ENCODE measurements at regions of chr2 and their contacts with region 1.

Region 1: DNA sequence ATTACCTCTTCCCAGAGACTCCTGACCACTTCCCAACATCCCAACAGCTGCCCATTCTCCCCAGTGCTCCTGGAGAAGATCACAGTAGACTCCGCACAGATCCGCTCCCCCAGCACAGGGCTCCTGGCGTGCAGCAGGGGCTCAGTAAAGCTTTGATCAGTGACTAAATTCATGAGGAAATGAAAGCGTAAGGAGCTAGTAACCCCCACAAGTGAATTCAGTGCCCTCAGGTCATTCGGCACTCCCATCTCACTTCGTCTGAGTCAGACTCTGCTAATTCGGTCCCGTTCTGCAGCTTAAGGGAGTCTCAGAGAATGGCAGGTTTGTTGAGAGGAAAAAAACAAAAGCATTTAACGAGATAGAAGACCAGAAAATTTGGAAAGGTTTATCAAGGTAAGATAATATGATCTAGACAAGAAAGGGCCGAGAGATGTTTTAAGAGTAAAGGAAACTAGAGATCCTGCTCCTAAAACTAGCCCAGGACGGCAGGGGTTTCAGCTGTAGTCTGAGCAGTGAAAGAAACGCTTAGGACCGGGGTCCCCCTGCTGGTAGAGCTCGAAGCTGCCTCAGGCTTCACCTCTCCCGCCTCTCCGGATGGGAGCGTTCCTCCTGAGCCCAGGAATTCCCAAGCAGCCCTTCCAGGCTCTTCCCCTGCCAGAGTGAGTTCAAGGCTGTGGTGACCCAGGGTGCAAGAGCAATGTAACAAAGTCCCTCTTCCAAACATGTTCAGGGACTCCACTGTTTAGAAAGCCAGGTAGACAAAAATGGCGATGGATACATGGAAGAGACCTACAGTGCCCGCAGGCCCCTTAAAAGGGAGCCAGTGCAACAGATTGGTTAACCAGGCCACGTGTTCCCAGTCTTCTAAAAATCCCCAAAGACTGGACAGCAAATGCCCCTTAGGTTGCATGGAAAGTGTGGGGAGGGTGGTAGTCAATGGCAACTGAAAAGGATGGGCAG is 127.3 kb downstream of the DNER start:
- DNase-seq: peak; percentile 84
- ATAC-seq: peak; percentile 96 to 98

Region 2: DNA sequence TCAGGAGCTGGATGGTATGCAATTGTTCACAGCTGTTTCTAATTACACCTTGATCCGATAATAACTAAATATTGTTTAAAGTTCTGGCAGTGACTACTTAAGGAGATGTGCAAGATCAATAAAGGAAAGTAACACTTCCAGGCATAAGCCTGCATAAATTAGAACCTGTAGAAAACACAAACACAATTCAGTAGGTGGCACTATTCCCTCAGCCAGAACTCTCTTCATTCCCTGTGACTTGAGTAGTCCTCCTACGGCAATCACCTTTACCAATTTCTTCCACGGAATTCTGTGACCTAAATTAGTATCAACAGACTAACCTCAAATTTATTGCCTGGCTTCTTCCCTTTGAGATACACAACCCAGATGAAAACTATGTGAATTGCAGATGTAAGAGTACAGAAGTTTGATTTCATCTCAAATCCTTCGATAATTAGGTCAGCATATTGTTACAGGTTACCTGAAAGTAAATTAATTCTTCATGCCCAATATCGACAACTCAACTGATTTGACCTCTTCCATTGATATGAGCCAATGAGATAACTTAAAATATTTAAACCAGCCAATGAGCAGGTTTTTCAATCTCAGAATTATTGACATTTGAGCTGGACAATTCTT is 453.8 kb before region 1 on chr2:
- intact Hi-C with region 1: loop called in 1 of 2 experiments (anchors 5 kb)
- DNase-seq: no peak
- ATAC-seq: peak; percentile 44 to 66

Region 3: GRCh38 chr2:229425598-229425997 is 161.4 kb before region 1 on chr2:
- intact Hi-C with region 1: loop called (anchors 2 to 5 kb)
- DNase-seq: no peak
- ATAC-seq: no peak

Region 4: DNA sequence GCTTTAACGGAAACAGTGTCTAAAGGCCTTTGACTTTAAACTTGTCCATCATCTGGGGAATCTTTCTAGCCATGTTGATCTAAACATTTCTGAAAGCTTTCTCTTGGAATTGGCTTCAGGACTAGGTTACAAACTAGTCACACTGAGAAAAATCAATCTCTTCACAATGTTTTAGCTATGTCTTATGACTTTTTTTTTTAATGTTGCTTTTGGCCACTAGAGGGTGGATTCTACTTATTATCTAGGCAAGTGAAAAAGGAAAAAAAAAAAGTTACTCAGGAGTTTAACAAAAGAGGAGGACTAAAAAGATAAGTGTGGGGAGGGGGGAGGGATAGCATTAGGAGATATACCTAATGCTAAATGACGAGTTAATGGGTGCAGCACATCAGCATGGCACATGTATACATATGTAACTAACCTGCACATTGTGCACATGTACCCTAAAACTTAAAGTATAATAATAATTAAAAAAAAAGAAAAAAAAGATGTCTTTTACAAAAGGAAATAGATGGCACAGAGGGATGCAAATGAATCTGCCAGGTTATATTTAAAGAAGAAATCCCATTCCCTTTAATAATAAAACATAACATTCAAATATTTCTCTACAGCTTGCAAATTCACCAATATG is 155.6 kb before region 1 on chr2:
- intact Hi-C with region 1: loop called (anchors 2 to 5 kb)
- DNase-seq: no peak
- ATAC-seq: no peak

Region 5: DNA sequence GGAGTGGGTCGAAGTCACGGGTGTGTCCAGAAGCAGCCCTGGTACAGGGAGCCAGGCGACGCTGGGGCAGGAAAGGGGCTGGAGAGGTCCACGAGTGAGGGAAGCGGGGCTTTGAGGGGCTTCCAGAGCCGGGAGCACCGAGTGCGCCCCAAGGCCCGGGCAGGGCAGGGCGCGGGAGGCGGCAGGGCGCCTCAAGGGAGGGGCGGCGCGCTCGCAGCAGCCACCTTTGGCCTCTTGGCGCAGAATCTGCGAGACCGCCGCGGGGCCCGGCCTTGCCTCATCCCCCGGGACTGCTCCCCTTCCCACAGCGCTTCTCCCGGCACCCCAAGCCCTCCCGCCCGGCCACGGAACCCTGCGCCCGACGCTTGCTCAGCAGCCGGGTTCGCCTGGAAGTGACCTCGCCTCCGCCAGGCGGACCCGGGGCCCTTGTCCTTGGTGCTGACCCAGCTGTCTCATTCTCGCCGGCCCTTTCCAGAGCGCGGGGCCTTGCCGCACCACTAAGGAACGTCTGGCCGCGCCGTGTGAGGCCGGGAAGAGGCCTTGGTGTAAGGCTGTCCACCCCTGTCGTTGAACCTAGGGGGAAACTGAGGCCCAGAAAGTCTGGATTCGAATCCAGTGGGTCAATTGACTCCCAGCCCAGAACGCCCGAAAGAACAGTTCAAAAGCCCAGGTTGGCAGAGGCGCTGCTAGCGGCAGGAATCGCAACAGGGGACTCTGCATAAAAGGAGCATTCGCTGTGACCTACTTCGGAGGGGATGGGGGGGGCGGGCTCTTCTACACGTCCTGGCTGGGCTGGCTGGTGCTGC is 127.9 kb after region 1 on chr2:
- intact Hi-C with region 1: loop called in 1 of 2 experiments (anchors 5 kb)
- DNase-seq: peak; percentile 68
- ATAC-seq: peak; percentile 78 to 89